Esophagus muscularis mucosa (tissue), 4 donors: ENCODE measurements at regions of chr9 and their contacts with region 1.

Region 1: GRCh38 chr9:129333953-129334724 is 156.1 kb upstream of the IER5L start:
- DNase-seq: peak; percentile 98
- H3K4me3 ChIP-seq: peak overlapping the region; percentile 19 to 45 (median 30)
- H3K27ac ChIP-seq: peak overlapping the region; percentile 82 to 92 (median 87)
- H3K4me1 ChIP-seq: peaks cover 40 to 73% (median 64%) of the 10 kb centered on the region in 4 donors
- H3K27me3 ChIP-seq: no peaks in the 10 kb centered on the region
- CTCF ChIP-seq: no peak
- EP300 ChIP-seq: peak; percentile 90
- POLR2A ChIP-seq: no peak

Region 2: GRCh38 chr9:129413537-129414376 is 79.6 kb after region 1 on chr9:
- intact Hi-C with region 1: loop called (anchors 5 kb)
- DNase-seq: peak; percentile 99
- H3K4me3 ChIP-seq: peak overlapping the region; percentile 64 to 74 (median 70)
- H3K27ac ChIP-seq: peak overlapping the region; percentile 95 to 100 (median 98)
- H3K4me1 ChIP-seq: peaks cover 31 to 53% (median 36%) of the 10 kb centered on the region in 4 donors
- H3K27me3 ChIP-seq: no peaks in the 10 kb centered on the region
- CTCF ChIP-seq: peak in 1 of 3 experiments; percentile 16
- EP300 ChIP-seq: no peak
- POLR2A ChIP-seq: peak; percentile 69

Region 3: DNA sequence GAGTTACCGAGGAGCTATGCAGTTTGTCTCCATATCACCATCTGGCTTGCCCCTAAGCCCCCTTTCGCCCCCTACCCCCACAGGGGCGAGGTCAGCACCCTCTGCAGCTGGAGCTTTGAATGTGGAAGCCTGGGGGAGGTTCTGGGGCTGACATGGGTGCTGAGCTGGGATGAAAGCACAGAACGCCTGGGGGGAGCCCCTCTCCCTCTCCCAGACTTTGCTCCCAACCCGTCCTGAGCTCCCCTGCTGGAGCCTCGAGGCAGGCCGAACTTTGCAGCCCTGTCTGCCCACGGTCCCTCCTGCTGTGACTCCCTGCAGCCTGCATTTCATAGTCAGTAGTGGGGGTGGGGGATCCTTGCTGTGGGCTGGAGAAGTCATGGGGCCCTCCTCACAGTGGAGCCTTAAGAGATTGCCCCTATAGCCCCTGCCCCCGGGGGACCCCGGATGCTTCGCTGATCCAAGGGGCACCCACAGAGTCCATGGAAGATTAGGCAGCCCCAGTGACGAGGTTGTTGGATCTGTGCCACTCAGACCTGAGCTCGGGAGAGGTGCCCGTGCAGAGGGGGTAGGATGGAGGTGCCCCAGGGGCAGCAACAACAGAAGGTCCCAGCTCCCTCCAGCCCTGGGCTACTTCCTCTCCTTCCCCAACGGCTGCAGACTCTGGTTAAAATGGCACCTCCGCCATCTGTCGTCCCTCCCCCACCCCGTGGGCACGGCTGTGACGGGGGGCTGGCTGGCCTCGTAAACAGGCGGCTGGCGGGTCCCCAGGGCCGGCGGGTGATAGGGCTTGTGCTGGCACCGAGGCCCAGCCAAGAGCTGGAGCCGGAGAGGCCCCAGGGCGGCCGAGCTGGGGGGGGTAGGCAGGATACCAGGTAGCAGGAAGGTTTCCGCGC is 124.8 kb after region 1 on chr9:
- intact Hi-C with region 1: loop called (anchors 5 kb)
- DNase-seq: no peak
- H3K4me3 ChIP-seq: no peak overlapping the region
- H3K27ac ChIP-seq: peak overlapping the region; percentile 90 to 97 (median 94)
- H3K4me1 ChIP-seq: peaks cover 37 to 55% (median 49%) of the 10 kb centered on the region in 4 donors
- H3K27me3 ChIP-seq: no peaks in the 10 kb centered on the region
- CTCF ChIP-seq: no peak
- EP300 ChIP-seq: no peak
- POLR2A ChIP-seq: no peak